PC-3 (cell line): ENCODE measurements at regions of chrX and their contacts with region 1.

Region 1: DNA sequence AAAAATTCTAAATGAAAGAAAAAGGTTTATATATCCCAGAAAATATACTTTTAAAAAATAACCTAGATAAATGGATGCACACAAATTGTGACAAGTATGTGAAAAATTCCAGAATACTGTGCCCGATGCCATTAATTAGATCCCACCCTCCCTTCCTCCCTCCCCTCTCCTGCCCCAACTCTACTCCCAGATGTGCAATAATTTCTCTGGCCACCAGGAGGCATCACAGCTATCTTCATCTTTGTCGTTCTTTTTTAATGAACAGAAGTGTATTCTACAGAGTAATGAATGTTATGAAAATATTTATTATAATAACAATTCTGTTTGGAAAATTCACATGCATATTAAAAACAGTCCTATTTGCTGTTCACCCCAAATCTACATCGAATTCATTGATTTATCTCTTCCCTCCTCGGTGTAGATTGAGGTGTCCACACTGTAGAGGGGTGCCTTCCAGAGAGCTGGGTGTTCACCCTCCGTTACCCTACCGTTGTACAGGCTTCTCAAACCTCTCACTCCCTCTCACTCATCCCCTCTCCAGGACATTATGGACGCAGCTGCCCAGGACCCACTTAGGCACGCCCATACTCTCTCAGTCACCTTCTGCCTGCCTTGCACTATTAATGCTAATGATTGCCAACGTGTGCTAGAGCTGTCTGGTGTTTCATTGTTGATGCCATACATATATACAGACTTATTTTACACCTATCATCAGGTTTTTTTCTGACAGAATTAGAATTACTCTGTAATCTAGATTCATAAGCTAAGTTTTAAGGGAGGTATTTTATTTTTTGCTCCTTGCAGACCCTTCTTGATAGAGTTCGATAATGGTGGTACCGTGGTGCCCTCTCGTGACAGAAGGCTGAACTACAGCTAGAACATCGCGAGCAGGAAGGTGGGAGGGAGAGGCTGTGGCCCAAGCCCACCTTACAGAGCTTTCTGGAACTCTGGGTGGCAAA is 14.1 kb downstream of the RAB40AL start:
- DNase-seq: peak; percentile 81
- ATAC-seq: peak; percentile 91
- H3K4me3 ChIP-seq: peak overlapping the region; percentile 54
- H3K27ac ChIP-seq: no peak overlapping the region
- H3K4me1 ChIP-seq: peaks cover 8% of the 10 kb centered on the region; the same call in 1 of the 2 replicates
- H3K27me3 ChIP-seq: no peaks in the 10 kb centered on the region
- CTCF ChIP-seq: peak; percentile 79

Region 2: DNA sequence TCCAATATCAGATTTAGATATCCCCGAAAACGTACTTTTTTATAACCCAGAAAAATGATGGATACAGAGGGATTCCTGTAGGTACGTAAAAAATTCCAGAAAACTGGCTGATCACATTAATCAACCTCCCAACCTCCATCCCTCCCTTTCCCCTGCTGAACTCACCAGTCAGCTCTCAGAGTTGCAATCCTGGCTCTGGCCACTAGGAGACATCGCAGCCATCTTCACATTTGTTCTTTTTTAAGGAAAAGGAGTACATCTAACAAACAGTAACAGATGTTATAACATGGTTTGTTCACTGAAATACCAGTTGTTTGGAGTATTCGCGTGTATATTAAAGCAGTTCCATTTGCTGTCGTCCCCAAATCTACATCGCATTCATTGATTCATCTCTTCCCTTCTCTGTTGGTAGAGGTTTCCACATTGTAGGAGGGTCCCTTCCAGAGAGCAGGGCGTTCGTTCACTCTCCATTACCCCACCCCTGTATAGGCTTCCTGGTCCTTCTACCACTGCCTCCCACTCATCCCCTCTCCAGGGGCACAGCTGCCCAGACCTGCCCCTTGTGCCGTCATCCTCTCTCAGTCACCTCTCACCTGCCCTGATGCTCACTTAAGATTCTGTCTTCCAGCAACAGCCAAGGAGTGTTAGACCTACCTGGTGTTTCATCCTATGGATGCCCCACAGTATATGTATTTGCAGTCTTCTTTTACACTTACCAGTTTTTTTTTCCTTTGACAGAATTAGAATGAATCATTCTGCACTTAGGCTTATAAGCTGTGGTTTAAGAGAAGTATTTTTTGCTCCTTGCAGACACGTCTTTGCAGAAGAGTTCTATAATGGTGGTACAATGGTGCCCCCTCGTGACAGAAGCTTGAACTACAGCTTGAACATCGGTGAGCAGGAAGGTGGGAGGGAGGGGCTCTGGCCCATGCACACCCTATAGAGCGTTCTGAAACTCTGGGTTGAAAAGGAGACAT is 51.0 kb before region 1 on chrX:
- CTCF ChIA-PET with region 1: interaction called, 26 read pairs
- POLR2A ChIA-PET with region 1: no interaction called
- intact Hi-C with region 1: loop called (anchors 1 kb)
- DNase-seq: peak; percentile 90
- ATAC-seq: peak; percentile 92
- H3K4me3 ChIP-seq: no peak overlapping the region
- H3K27ac ChIP-seq: no peak overlapping the region
- H3K4me1 ChIP-seq: peaks cover 4% of the 10 kb centered on the region; the same call in 1 of the 2 replicates
- H3K27me3 ChIP-seq: no peaks in the 10 kb centered on the region
- CTCF ChIP-seq: peak; percentile 72

Region 3: GRCh38 chrX:102934624-102935023 is 16.6 kb before region 1 on chrX:
- CTCF ChIA-PET with region 1: interaction called, 13 read pairs
- POLR2A ChIA-PET with region 1: no interaction called
- intact Hi-C with region 1: no loop called
- DNase-seq: peak; percentile 67
- ATAC-seq: no peak
- H3K4me3 ChIP-seq: no peak overlapping the region
- H3K27ac ChIP-seq: no peak overlapping the region
- H3K4me1 ChIP-seq: peaks cover 40% of the 10 kb centered on the region
- H3K27me3 ChIP-seq: no peaks in the 10 kb centered on the region
- CTCF ChIP-seq: peak; percentile 74

Region 4: GRCh38 chrX:103157496-103158320 is 206.5 kb after region 1 on chrX:
- CTCF ChIA-PET with region 1: interaction called, 4 read pairs
- POLR2A ChIA-PET with region 1: no interaction called
- intact Hi-C with region 1: loop called (anchors 1 kb)
- DNase-seq: peak; percentile 78
- ATAC-seq: peak; percentile 53
- H3K4me3 ChIP-seq: no peak overlapping the region
- H3K27ac ChIP-seq: peak overlapping the region; percentile 60
- H3K4me1 ChIP-seq: peaks cover 31% of the 10 kb centered on the region
- H3K27me3 ChIP-seq: no peaks in the 10 kb centered on the region
- CTCF ChIP-seq: peak; percentile 80

Region 5: GRCh38 chrX:103175944-103176753 is 225.0 kb after region 1 on chrX:
- CTCF ChIA-PET with region 1: interaction called, 11 read pairs
- POLR2A ChIA-PET with region 1: no interaction called
- intact Hi-C with region 1: loop called (anchors 1 kb)
- DNase-seq: peak; percentile 76
- ATAC-seq: peak; percentile 80
- H3K4me3 ChIP-seq: peak overlapping the region; percentile 66
- H3K27ac ChIP-seq: no peak overlapping the region
- H3K4me1 ChIP-seq: no peaks in the 10 kb centered on the region
- H3K27me3 ChIP-seq: peaks cover 4% of the 10 kb centered on the region; the same call in 1 of the 2 replicates
- CTCF ChIP-seq: peak; percentile 88